ENCODE measurements at regions of chr4 and their contacts with region 1.

Region 1: DNA sequence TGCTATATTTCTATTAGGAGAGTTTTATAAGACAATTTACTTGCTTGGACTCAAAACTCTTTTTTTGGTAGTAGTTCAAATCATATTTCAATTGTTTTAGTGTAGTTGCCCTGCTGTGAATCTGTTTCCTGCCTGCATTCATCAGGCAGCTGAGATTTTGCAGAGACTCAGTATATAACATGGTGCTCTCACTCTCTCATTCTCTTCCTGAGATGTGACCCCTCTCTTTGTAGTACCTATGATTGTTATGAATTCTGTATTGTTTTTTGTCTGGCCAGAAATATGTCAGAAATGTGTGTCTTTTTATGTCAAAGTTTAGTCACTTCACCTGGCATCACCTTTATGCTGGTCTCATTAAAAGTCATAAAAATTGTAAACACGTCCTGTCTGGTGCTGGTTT is 374.0 kb downstream of the RAPGEF2 start:
- DNase-seq: no peak
- H3K4me3 ChIP-seq: no peak overlapping the region
- H3K27ac ChIP-seq: no peak overlapping the region
- H3K4me1 ChIP-seq: no peaks in the 10 kb centered on the region
- H3K27me3 ChIP-seq: no peaks in the 10 kb centered on the region
- CTCF ChIP-seq: no peak
- POLR2A ChIP-seq: no peak

Region 2: DNA sequence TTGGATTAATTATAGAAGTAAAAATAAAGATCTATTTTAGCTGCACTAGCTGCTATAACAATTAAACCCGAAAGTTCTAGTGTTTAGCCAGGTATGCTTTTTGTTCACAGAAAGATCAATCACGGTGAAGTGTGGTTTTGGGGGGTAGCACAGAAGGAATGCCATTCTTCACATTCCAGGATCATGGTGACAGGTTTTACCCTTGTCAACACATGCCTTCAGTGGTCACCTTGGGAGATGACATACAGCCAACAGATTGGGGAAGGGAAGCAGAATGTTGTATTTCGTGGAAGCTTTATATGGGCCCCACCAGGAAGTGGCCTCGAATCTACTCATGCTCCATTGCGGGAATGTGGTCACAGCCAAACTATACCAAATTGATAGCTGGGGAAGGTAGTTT is 379.6 kb after region 1 on chr4:
- intact Hi-C with region 1: no loop called
- DNase-seq: no peak
- H3K4me3 ChIP-seq: no peak overlapping the region
- H3K27ac ChIP-seq: no peak overlapping the region
- H3K4me1 ChIP-seq: no peaks in the 10 kb centered on the region
- H3K27me3 ChIP-seq: no peaks in the 10 kb centered on the region
- CTCF ChIP-seq: no peak
- POLR2A ChIP-seq: no peak

Region 3: GRCh38 chr4:159867673-159868072 is 390.8 kb after region 1 on chr4:
- intact Hi-C with region 1: loop called (anchors 5 kb)
- DNase-seq: no peak
- H3K4me3 ChIP-seq: no peak overlapping the region
- H3K27ac ChIP-seq: no peak overlapping the region
- H3K4me1 ChIP-seq: no peaks in the 10 kb centered on the region
- H3K27me3 ChIP-seq: no peaks in the 10 kb centered on the region
- CTCF ChIP-seq: no peak
- POLR2A ChIP-seq: no peak

Measured in thyroid gland (tissue), 4 donors.